Endothelial cell of umbilical vein (primary cell): ENCODE measurements at regions of chr11 and their contacts with region 1.

Region 1: GRCh38 chr11:76207642-76208401 is 1.5 kb upstream of the WNT11 start:
- DNase-seq: peak; percentile 70
- H3K4me3 ChIP-seq: peak overlapping the region in 2 of 3 experiments; percentile 21 to 41
- H3K27ac ChIP-seq: no peak overlapping the region
- H3K4me1 ChIP-seq: peaks cover 18% of the 10 kb centered on the region
- H3K27me3 ChIP-seq: peaks cover 55 to 70% of the 10 kb centered on the region in 2 experiments
- CTCF ChIP-seq: peak; percentile 93 to 97
- POLR2A ChIP-seq: no peak

Region 2: DNA sequence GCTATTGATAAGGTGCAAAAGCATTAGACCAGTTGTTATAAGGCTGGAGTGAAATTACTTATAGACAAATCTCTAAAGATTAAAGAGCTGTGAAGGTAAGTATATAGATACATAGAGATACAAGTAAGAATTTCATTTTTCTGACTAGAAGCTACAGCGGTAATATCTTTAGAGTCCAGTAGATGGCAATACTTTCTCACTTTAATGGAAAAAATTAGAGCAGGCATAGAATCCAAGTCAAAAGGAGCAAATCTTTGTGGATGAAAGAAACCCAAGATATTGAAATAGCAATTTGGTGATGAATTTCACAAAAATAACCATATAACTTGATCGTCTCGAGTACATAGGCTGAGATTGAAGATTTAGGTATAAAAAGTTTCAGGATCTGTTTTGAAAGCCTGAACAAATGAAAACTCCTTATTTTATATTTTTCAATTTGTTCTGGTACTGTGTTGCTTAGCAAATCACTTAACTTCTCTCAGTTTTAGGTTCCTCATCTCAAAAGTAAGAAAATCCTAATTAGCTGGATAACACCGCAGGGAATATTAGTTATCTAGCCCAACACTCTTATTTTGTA is 310.9 kb before region 1 on chr11:
- CTCF ChIA-PET with region 1: interaction called, 40 read pairs
- POLR2A ChIA-PET with region 1: no interaction called
- dilution Hi-C with region 1: no loop called
- intact Hi-C with region 1: loop called (anchors 1 kb)
- DNase-seq: peak; percentile 63
- H3K4me3 ChIP-seq: no peak overlapping the region
- H3K27ac ChIP-seq: no peak overlapping the region
- H3K4me1 ChIP-seq: no peaks in the 10 kb centered on the region
- H3K27me3 ChIP-seq: no peaks in the 10 kb centered on the region
- CTCF ChIP-seq: peak; percentile 31 to 35
- POLR2A ChIP-seq: no peak

Region 3: DNA sequence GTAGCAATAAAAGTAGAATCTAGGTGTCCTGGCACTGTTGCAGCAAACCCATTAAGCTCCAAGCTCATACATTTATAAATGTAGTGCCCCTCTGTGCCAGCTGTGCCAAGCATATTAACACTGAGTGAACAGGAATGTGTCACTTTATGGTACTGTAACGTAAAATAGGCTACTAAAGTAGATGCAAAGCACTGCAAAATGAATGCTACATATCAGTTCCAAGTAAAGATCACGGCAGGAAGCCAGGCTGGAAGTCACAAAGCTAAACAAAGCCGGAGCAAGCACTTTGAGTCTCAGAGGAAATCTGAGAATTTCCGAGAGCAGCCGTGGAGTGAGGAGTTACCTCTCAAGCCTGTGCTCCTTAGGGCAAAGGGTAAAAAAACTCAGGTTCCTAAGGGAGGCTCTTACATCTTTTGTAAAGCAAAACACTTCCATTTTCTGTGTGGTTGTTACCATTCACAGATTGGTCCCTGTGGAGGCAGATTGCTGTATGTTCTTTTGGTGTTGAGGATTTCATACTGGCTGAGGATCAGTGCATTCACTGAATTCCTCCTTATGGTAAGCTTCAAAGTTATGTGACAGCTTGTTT is 87.2 kb before region 1 on chr11:
- CTCF ChIA-PET with region 1: no interaction called
- POLR2A ChIA-PET with region 1: no interaction called
- dilution Hi-C with region 1: no loop called
- intact Hi-C with region 1: no loop called
- DNase-seq: peak; percentile 69
- H3K4me3 ChIP-seq: peak overlapping the region in 1 of 3 experiments; percentile 23
- H3K27ac ChIP-seq: peak overlapping the region; percentile 38
- H3K4me1 ChIP-seq: peaks cover 25% of the 10 kb centered on the region
- H3K27me3 ChIP-seq: no peaks in the 10 kb centered on the region
- CTCF ChIP-seq: no peak
- POLR2A ChIP-seq: no peak

Region 4: DNA sequence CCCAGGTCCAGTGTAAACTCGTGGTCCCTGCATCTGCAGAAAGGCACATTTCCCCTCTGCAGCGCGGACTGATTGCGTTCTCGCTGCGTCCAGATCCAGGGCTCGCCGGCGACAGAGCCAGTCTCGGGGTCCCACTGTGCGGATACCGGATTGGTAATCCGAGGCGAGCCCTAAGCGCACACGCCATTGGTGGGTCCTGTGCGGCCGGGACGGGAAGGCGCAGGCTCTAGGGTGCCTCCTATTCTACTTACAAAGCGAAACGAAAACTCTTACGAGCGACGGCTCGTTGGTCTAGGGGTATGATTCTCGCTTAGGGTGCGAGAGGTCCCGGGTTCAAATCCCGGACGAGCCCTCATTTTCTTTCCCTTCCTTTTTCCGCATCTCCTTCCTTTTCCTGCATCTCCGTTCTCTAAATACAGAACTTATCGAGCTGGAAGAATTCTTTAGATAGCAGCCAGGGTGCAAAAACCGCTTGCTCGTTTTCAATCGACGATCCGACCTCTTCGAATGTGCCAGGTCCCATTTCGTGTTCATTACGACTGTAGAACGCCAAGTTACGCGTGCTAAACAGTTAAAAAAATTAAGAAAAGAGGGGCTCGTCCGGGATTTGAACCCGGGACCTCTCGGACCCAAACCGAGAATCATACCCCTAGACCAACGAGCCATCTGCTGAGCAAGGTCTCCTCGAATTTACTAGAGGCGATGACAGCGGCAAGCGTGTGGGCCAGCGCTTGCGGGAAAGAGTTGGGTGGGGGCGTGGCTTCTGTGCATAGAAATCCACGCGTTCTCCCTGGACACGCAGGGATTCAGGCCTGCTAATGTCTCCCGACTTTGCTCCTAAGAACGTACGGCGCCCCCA is 27.6 kb after region 1 on chr11:
- CTCF ChIA-PET with region 1: interaction called, 61 read pairs
- POLR2A ChIA-PET with region 1: no interaction called
- dilution Hi-C with region 1: no loop called
- intact Hi-C with region 1: loop called (anchors 1 kb)
- DNase-seq: peak; percentile 95
- H3K4me3 ChIP-seq: peak overlapping the region; percentile 68 to 84 (median 76)
- H3K27ac ChIP-seq: no peak overlapping the region
- H3K4me1 ChIP-seq: peaks cover 8% of the 10 kb centered on the region
- H3K27me3 ChIP-seq: no peaks in the 10 kb centered on the region
- CTCF ChIP-seq: no peak
- POLR2A ChIP-seq: no peak

Region 5: GRCh38 chr11:76302996-76303395 is 95.2 kb after region 1 on chr11:
- CTCF ChIA-PET with region 1: interaction called, 321 read pairs
- POLR2A ChIA-PET with region 1: no interaction called
- dilution Hi-C with region 1: no loop called
- intact Hi-C with region 1: no loop called
- DNase-seq: no peak
- H3K4me3 ChIP-seq: no peak overlapping the region
- H3K27ac ChIP-seq: no peak overlapping the region
- H3K4me1 ChIP-seq: no peaks in the 10 kb centered on the region
- H3K27me3 ChIP-seq: peaks cover 3 to 8% of the 10 kb centered on the region in 2 experiments
- CTCF ChIP-seq: no peak
- POLR2A ChIP-seq: no peak

Region 6: DNA sequence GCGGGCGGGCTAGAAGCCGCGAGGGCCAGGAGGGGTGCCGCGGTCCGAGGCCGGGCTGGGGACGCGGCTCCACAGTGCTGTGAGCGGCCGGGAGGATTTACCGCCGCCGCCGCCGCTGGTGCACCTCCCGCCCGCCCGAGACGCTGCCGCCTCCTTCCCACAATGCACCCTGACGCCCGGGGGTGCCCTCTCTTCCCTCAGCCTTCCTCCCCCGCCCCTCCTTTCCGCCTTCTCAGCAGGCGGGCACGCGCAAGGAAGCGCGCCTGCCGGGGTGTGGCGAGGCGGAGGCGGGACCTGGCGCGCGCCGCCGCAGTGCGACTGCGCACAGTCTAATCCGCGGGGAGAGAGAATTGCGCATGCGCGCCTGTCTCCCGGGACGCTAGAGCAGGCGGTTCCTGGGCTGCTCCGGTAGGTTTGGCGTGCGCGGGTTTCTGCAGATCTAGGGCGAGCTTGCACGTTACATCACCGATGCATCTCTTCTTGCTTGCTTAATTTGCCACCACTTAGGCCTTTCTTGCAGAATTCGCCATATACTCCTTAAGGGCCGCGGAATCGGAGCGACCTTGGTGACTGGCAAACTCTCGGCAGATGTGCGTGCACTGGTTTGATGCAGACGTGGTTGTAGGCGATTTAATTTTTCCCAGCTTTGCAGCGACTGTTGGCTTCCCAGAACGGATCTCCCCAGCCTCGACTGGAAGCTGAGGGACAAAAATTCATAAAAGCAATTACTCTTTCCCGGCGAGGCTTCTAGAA is 173.3 kb after region 1 on chr11 and contains the starts of genes GVQW3 and THAP12:
- CTCF ChIA-PET with region 1: no interaction called
- POLR2A ChIA-PET with region 1: no interaction called
- dilution Hi-C with region 1: no loop called
- intact Hi-C with region 1: loop called (anchors 2 kb)
- DNase-seq: peak; percentile 99
- H3K4me3 ChIP-seq: peak within 1 kb of the TSS; percentile 71 to 89 (median 82)
- H3K27ac ChIP-seq: peak within 1 kb of the TSS; percentile 27
- H3K4me1 ChIP-seq: peaks cover 18% of the 10 kb centered on the region
- H3K27me3 ChIP-seq: no peaks in the 10 kb centered on the region
- CTCF ChIP-seq: peak; percentile 7 to 8
- POLR2A ChIP-seq: peak; percentile 82
- total RNA-seq, gene GVQW3: 0.99 and 2.8 TPM in 2 replicates
- total RNA-seq, gene THAP12: 32.3 and 36.7 TPM in 2 replicates

Region 7: DNA sequence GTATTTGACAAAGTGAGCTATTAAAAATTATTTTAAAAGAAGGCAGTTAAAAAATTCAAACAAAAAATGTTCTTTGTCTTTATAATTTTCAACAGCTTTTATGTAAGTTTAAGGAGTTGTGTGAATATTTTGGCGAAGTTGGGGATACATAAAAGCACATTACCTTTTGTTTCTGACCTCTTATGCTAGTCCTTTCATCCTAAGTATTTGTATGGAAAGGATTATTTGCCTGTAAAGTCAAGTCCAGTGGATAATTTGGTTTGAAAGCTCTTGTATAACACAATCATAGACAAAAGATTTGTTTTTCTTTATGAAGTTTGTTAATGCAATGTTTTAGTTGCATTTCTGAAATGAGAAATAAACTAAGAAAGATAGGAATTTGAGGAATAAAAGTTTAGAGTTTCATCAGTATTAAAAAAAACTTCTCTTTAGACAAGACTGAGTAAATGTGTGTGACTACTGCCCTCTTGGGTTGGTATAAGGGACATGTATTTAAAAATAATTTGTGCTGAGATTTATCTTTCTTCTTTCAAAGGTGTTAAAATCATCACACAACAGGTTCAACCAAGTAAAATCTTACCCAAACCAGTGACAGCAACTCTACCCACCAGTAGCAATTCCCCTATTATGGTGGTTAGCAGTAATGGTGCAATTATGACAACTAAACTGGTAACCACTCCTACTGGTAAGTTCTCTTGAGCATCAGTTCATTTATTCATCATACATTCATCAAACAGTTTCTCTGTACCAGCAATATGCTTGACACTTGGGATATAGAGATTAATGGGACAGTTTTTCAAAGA is 305.2 kb after region 1 on chr11:
- CTCF ChIA-PET with region 1: interaction called, 53 read pairs
- POLR2A ChIA-PET with region 1: no interaction called
- dilution Hi-C with region 1: no loop called
- intact Hi-C with region 1: loop called (anchors 1 kb)
- DNase-seq: peak; percentile 58
- H3K4me3 ChIP-seq: no peak overlapping the region
- H3K27ac ChIP-seq: no peak overlapping the region
- H3K4me1 ChIP-seq: peaks cover 10% of the 10 kb centered on the region
- H3K27me3 ChIP-seq: no peaks in the 10 kb centered on the region
- CTCF ChIP-seq: peak; percentile 14 to 15
- POLR2A ChIP-seq: no peak

Region 8: GRCh38 chr11:76694664-76695063 is 486.8 kb after region 1 on chr11:
- CTCF ChIA-PET with region 1: interaction called, 11 read pairs
- POLR2A ChIA-PET with region 1: no interaction called
- dilution Hi-C with region 1: no loop called
- intact Hi-C with region 1: no loop called
- DNase-seq: peak; percentile 92
- H3K4me3 ChIP-seq: no peak overlapping the region
- H3K27ac ChIP-seq: peak overlapping the region; percentile 72
- H3K4me1 ChIP-seq: peaks cover 25% of the 10 kb centered on the region
- H3K27me3 ChIP-seq: no peaks in the 10 kb centered on the region
- CTCF ChIP-seq: no peak
- POLR2A ChIP-seq: no peak